ENCODE measurements at regions of chr6 and their contacts with region 1.

Region 1: GRCh38 chr6:15327271-15327670 is 81.4 kb downstream of the JARID2 start:
- DNase-seq: no peak
- ATAC-seq: peak; percentile 66
- H3K4me3 ChIP-seq: no peak overlapping the region; the same call in 1 of the 2 replicates
- H3K27ac ChIP-seq: peak overlapping the region; percentile 72
- H3K4me1 ChIP-seq: peaks cover 69% of the 10 kb centered on the region
- H3K27me3 ChIP-seq: no peaks in the 10 kb centered on the region
- CTCF ChIP-seq: peak; percentile 57 to 62 (median 60)
- EP300 ChIP-seq: no peak
- POLR2A ChIP-seq: no peak
- RAD21 ChIP-seq: peak; percentile 64

Region 2: DNA sequence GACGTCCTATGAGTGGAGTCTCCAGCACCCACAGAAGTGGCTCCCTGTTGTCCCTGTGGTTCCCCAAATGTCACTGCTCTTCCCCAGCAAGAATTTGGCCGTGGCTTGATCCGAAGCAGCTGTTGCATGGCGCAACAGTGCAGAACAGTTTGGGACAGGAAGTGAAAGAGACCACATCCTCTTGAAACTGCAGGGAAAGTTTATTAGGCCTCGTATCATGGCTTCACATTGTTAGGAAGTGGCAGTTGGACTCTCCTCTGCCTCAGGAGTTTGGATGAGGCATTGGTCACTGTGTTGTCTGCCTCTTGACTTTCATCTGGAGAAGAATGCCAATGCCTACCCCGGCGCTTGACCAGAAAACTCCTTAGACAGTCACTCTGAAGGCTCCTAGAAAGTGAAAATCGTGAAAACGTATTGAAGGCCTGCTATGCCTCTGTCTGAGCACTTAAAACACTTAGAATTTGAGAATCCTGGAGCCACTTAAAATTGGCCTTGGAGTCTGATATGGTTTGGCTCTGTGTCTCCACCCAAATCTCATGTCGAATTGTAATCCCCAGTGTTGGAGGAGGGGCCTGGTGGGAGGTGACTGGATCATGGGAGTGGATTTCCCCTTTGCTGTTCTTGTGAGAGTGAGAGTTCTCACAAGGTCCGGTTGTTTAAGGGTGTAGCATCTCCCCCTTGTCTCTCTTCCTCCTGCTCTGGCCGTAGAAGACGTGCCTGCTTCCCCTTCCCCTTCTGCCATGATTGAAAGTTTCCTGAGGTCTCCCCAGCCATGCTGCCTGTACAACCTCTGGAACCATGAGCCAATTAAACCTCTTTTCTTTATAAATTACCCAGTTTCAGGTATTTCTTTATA is 416.4 kb before region 1 on chr6:
- CTCF ChIA-PET with region 1: no interaction called
- POLR2A ChIA-PET with region 1: no interaction called
- RAD21 ChIA-PET with region 1: no interaction called
- SMC1A ChIA-PET with region 1: no interaction called
- in situ Hi-C with region 1: no loop called
- intact Hi-C with region 1: no loop called
- DNase-seq: peak; percentile 78
- ATAC-seq: peak; percentile 93
- H3K4me3 ChIP-seq: 0 out of 2 replicates have a peak overlapping the region, but pooled peaks have one; percentile 24
- H3K27ac ChIP-seq: peak overlapping the region; percentile 91
- H3K4me1 ChIP-seq: peaks cover 23% of the 10 kb centered on the region
- H3K27me3 ChIP-seq: no peaks in the 10 kb centered on the region
- CTCF ChIP-seq: no peak
- EP300 ChIP-seq: peak; percentile 28 to 94; a peak in 2 of 4 replicates
- POLR2A ChIP-seq: peak; percentile 43; the same call in 1 of the 2 replicates
- RAD21 ChIP-seq: peak; percentile 41; the same call in 1 of the 2 replicates

Region 3: DNA sequence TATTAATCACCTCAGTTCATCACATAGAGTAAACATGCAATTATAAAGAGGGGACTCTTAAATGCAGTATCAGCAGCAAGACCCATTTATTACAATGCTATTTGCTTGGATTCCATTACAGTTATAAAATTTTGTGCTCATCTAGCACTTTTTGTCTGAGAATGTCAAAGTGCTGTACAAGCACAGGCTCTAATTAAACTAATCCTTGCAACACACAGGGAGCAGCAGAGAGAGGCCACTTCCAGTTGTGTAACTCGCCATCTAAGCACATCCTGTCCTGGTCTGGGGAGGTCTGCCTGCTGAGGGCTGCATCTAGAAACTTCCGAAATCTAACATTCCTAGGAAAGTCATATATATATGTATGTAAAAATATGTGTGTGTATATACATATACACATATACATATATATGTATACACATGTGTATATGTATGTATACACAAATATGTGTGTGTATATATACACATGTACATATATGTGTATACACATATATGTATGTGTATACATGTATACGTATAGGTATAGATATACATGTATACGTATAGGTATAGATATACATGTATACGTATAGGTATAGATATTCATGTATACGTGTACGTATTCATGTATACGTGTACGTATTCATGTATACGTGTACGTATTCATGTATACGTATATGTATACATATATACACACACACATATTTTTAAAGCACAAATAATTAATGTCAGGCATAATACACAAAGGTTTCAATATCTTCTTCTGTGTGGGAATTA is 217.8 kb before region 1 on chr6:
- CTCF ChIA-PET with region 1: no interaction called
- POLR2A ChIA-PET with region 1: no interaction called
- RAD21 ChIA-PET with region 1: no interaction called
- SMC1A ChIA-PET with region 1: no interaction called
- in situ Hi-C with region 1: no loop called
- intact Hi-C with region 1: no loop called
- DNase-seq: no peak
- ATAC-seq: no peak
- H3K4me3 ChIP-seq: no peak overlapping the region
- H3K27ac ChIP-seq: no peak overlapping the region
- H3K4me1 ChIP-seq: no peaks in the 10 kb centered on the region
- H3K27me3 ChIP-seq: no peaks in the 10 kb centered on the region
- CTCF ChIP-seq: no peak
- EP300 ChIP-seq: no peak
- POLR2A ChIP-seq: no peak
- RAD21 ChIP-seq: no peak

Region 4: DNA sequence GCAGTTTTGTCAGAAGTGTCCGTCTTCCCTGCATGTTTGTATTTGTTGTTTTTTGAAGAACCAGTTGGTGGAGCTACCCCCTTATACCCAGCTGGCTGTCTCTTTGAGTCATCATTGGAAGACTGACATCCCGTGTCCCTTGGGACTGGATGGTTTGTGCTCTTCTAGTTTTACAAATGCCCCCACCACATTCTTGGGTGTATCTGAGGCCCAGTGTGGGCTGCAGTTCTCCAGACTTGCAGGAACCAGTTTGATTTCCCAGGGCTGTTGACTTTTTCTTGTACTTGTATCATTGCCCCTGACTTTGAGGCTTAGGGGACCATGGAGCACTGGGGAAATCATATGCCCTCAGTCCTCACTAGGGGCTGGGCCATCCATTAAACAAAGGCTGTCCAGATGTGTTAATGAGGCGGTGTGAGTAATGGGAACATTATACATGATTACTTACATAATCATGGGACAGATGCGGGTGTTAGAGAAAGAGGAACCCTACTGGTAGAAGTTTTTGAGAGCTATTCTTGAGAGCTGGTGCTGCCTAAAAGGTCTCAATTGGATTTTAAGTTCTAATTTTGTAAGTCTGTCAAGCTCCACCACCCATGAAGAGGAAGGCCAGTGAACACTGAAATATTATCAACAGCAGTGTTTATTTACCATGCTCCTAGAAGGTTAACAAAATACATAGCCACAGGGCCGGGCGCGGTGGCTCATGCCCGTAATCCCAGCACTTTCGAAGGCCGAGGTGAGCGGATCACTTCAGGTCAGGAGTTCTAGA is 73.0 kb before region 1 on chr6:
- CTCF ChIA-PET with region 1: interaction called, 40 read pairs
- POLR2A ChIA-PET with region 1: interaction called, 5 read pairs
- RAD21 ChIA-PET with region 1: interaction called, 38 read pairs
- SMC1A ChIA-PET with region 1: interaction called, 90 read pairs
- in situ Hi-C with region 1: no loop called
- intact Hi-C with region 1: loop called (anchors 2 kb)
- DNase-seq: peak; percentile 82
- ATAC-seq: peak; percentile 50
- H3K4me3 ChIP-seq: peak overlapping the region; percentile 42; the same call in 1 of the 2 replicates
- H3K27ac ChIP-seq: peak overlapping the region; percentile 92
- H3K4me1 ChIP-seq: peaks cover 78% of the 10 kb centered on the region
- H3K27me3 ChIP-seq: no peaks in the 10 kb centered on the region
- CTCF ChIP-seq: peak; percentile 40 to 65 (median 50); a peak in 5 of 6 replicates
- EP300 ChIP-seq: peak in 1 of 2 experiments; percentile 27; a peak in 1 of 4 replicates
- POLR2A ChIP-seq: no peak
- RAD21 ChIP-seq: peak; percentile 71

Region 5: DNA sequence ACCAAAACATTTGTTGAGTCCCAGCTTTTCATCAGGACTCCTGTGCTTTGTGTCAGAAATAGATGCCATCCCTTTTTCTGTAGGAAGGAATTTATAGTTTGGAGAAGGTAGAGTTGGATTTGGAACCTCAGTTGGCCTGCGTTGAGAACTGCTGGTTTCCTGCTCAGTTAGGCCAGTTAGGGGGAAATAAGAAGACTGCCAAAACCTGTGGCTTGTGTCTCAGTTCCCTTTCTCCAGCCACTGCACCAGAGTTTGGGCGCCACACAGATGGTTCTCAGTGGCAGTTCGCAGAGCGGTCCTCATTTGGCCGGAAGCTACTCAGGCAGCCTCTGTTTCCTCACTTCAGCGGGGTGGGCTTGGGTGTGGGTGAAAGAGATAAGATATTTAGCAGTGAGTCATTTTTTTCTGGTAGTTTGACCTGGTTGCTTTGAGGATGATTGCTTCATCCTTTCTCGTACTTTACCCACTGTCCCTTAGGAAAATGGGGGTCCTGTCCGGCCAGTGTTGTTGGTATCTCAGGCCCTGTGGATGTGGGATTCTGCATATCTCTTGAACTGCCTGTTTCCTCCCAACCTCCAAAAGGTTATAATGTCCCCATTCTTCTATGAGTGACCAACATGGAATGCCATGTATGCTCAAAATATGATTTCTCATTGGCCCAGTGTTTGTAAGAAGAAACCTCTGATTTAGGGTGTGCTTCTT is 27.7 kb before region 1 on chr6:
- CTCF ChIA-PET with region 1: interaction called, 5 read pairs
- POLR2A ChIA-PET with region 1: interaction called, 9 read pairs
- RAD21 ChIA-PET with region 1: interaction called, 59 read pairs
- SMC1A ChIA-PET with region 1: interaction called, 301 read pairs
- in situ Hi-C with region 1: no loop called
- intact Hi-C with region 1: loop called (anchors 2 kb)
- DNase-seq: peak; percentile 90
- ATAC-seq: peak; percentile 88
- H3K4me3 ChIP-seq: peak overlapping the region; percentile 50; the same call in 1 of the 2 replicates
- H3K27ac ChIP-seq: peak overlapping the region; percentile 80
- H3K4me1 ChIP-seq: peaks cover 79% of the 10 kb centered on the region
- H3K27me3 ChIP-seq: no peaks in the 10 kb centered on the region
- CTCF ChIP-seq: no peak
- EP300 ChIP-seq: peak; percentile 59 to 84; a peak in 3 of 4 replicates
- POLR2A ChIP-seq: peak; percentile 47; the same call in 1 of the 2 replicates
- RAD21 ChIP-seq: no peak

Region 6: GRCh38 chr6:15346315-15346714 is 19.0 kb after region 1 on chr6:
- CTCF ChIA-PET with region 1: interaction called, 15 read pairs
- POLR2A ChIA-PET with region 1: interaction called, 5 read pairs
- RAD21 ChIA-PET with region 1: interaction called, 10 read pairs
- SMC1A ChIA-PET with region 1: interaction called, 60 read pairs
- in situ Hi-C with region 1: no loop called
- intact Hi-C with region 1: no loop called
- DNase-seq: no peak
- ATAC-seq: no peak
- H3K4me3 ChIP-seq: no peak overlapping the region
- H3K27ac ChIP-seq: peak overlapping the region; percentile 8; the same call in 1 of the 2 replicates
- H3K4me1 ChIP-seq: peaks cover 14% of the 10 kb centered on the region
- H3K27me3 ChIP-seq: no peaks in the 10 kb centered on the region
- CTCF ChIP-seq: no peak
- EP300 ChIP-seq: no peak
- POLR2A ChIP-seq: no peak
- RAD21 ChIP-seq: no peak

Region 7: DNA sequence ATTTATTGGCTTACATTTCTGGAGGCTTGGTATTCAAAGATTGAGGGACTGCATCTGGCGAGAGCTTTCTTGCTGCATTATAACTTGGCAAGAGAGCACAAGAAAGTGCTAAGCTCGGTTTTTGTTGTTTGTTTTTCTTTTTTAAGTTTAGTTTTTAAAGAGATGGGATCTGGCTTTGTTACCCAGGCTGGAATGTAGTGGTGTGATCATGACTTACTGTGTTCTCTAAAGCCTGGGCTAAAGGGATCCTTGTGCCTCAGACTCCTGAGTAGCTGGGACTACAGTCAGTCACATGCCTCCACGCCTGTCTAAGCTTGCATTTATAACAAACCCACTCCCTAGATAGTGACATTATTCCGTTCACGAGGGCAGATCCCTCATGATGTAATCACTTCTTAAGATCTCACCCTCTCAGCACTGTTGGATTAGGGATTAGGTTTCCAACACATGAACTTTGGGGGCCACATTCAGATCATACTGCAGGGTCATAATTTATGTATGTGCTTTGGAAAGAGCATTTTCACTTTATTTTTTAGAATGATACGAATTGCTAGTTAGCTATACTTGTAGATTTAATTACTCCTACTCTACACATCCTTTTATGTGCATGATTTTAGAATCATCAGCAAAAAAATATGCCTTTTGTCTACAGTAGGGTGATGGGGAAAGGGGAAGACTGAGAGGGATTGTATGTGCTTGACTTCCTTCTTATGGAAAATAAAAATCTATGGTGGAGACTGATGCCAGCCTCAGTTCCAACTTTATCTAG is 86.4 kb after region 1 on chr6:
- CTCF ChIA-PET with region 1: interaction called, 6 read pairs
- POLR2A ChIA-PET with region 1: interaction called, 3 read pairs
- RAD21 ChIA-PET with region 1: interaction called, 6 read pairs
- SMC1A ChIA-PET with region 1: interaction called, 16 read pairs
- in situ Hi-C with region 1: no loop called
- intact Hi-C with region 1: no loop called
- DNase-seq: no peak
- ATAC-seq: no peak
- H3K4me3 ChIP-seq: no peak overlapping the region
- H3K27ac ChIP-seq: no peak overlapping the region
- H3K4me1 ChIP-seq: peaks cover 24% of the 10 kb centered on the region
- H3K27me3 ChIP-seq: no peaks in the 10 kb centered on the region
- CTCF ChIP-seq: no peak
- EP300 ChIP-seq: no peak
- POLR2A ChIP-seq: no peak
- RAD21 ChIP-seq: no peak

Region 8: DNA sequence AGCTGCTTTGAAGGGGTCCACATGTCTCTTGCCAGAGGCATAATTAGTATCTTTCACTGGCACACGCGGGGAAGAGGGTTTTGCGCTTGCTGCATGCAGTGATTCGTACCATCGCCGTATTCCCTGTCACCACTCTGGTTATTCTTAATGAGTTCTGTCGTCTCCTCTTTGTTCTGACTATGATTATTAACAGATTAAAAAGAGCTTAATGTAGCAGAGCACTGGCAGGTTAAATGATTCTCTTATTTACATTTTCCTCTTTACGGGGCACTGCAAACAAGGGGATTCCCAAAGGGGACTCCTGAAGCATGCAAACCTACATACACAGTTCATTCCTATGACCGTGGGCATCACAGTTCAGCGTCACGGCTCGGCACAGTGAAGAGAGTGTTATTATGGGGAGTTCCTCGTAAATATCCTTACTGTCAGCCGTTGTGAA is 130.8 kb after region 1 on chr6:
- CTCF ChIA-PET with region 1: interaction called, 6 read pairs
- POLR2A ChIA-PET with region 1: no interaction called
- RAD21 ChIA-PET with region 1: interaction called, 8 read pairs
- SMC1A ChIA-PET with region 1: interaction called, 18 read pairs
- in situ Hi-C with region 1: no loop called
- intact Hi-C with region 1: no loop called
- DNase-seq: peak; percentile 40
- ATAC-seq: peak; percentile 95
- H3K4me3 ChIP-seq: peak overlapping the region; percentile 9; the same call in 1 of the 2 replicates
- H3K27ac ChIP-seq: peak overlapping the region; percentile 37
- H3K4me1 ChIP-seq: peaks cover 17% of the 10 kb centered on the region
- H3K27me3 ChIP-seq: no peaks in the 10 kb centered on the region
- CTCF ChIP-seq: no peak
- EP300 ChIP-seq: 0 out of 4 replicates have a peak, but pooled peaks of 1 of the 2 experiments have one; percentile 35
- POLR2A ChIP-seq: no peak
- RAD21 ChIP-seq: no peak